Upper lobe of right lung (tissue), 1 donor: ENCODE measurements at regions of chr10 and their contacts with region 1.

Region 1: GRCh38 chr10:101782811-101783735 is at the start of gene NPM3:
- DNase-seq: peak; percentile 89
- ATAC-seq: peak; percentile 66
- H3K4me3 ChIP-seq: peak within 1 kb of the TSS; percentile 73
- H3K27ac ChIP-seq: peak within 1 kb of the TSS; percentile 63
- H3K4me1 ChIP-seq: peaks cover 42% of the 10 kb centered on the region
- H3K27me3 ChIP-seq: peaks cover 14% of the 10 kb centered on the region
- CTCF ChIP-seq: no peak
- total RNA-seq, gene NPM3: 18.0 TPM

Region 2: DNA sequence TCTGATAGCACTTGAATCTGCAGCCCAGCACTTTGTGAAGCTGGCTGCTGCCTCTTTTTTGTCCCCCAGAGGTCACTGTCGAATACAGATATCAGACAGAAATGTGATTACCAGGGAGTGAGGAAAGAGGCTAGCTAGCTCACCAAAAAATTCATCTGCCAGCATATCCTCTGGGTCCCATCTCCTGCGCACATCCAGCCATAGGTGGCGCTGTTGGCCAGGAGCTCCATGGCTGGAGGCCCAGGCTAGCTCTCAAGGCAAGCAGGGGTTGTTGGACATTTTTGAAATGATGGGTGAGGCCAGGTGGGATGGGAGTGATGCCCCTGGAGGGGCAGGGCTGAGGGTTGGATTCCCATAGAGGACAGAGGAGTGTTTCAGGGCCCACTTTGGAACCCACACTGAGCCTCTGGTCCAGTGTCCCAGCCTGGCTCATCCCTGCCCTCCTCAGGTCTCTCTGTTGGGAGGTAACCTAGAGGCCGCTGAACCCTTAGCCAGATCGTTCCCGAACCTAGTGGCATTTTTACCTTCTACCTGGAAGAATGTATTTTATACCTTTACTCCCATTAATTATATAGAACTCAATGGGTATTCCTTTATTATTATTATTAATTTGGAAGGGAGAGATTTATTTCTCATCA is 180.2 kb before region 1 on chr10:
- intact Hi-C with region 1: loop called (anchors 5 kb)
- DNase-seq: peak; percentile 88
- ATAC-seq: peak; percentile 93
- H3K4me3 ChIP-seq: no peak overlapping the region
- H3K27ac ChIP-seq: no peak overlapping the region
- H3K4me1 ChIP-seq: no peaks in the 10 kb centered on the region
- H3K27me3 ChIP-seq: no peaks in the 10 kb centered on the region
- CTCF ChIP-seq: peak; percentile 80